K562 (cell line): ENCODE measurements at regions of chr5 and their contacts with region 1.

Region 1: GRCh38 chr5:150436141-150436680 is 13.3 kb downstream of the RPS14 start:
- DNase-seq: peak; percentile 88 to 91 (median 90)
- ATAC-seq: peak; percentile 95
- H3K4me3 ChIP-seq: no peak overlapping the region
- H3K27ac ChIP-seq: no peak overlapping the region
- H3K4me1 ChIP-seq: peaks cover 0 to 6% of the 10 kb centered on the region in 2 experiments; a peak in 3 of 5 replicates
- H3K27me3 ChIP-seq: peaks cover 0 to 6% of the 10 kb centered on the region in 2 experiments; a peak in 3 of 5 replicates
- CTCF ChIP-seq: peak; percentile 86 to 90 (median 89)
- EP300 ChIP-seq: no peak
- POLR2A ChIP-seq: no peak
- RAD21 ChIP-seq: peak; percentile 83 to 91

Region 2: GRCh38 chr5:150272526-150272925 is 163.7 kb before region 1 on chr5:
- CTCF ChIA-PET with region 1: interaction called, 5 read pairs
- POLR2A ChIA-PET with region 1: no interaction called
- in situ Hi-C with region 1: no loop called
- intact Hi-C with region 1: loop called (anchors 2 kb)
- DNase-seq: peak in 3 of 4 experiments; percentile 35 to 63 (median 62)
- ATAC-seq: peak; percentile 89
- H3K4me3 ChIP-seq: no peak overlapping the region
- H3K27ac ChIP-seq: no peak overlapping the region
- H3K4me1 ChIP-seq: no peaks in the 10 kb centered on the region
- H3K27me3 ChIP-seq: peaks cover 22 to 57% of the 10 kb centered on the region in 2 experiments; a peak in 4 of 5 replicates
- CTCF ChIP-seq: peak; percentile 65 to 82 (median 75)
- EP300 ChIP-seq: no peak
- POLR2A ChIP-seq: no peak
- RAD21 ChIP-seq: peak; percentile 90 to 94

Region 3: DNA sequence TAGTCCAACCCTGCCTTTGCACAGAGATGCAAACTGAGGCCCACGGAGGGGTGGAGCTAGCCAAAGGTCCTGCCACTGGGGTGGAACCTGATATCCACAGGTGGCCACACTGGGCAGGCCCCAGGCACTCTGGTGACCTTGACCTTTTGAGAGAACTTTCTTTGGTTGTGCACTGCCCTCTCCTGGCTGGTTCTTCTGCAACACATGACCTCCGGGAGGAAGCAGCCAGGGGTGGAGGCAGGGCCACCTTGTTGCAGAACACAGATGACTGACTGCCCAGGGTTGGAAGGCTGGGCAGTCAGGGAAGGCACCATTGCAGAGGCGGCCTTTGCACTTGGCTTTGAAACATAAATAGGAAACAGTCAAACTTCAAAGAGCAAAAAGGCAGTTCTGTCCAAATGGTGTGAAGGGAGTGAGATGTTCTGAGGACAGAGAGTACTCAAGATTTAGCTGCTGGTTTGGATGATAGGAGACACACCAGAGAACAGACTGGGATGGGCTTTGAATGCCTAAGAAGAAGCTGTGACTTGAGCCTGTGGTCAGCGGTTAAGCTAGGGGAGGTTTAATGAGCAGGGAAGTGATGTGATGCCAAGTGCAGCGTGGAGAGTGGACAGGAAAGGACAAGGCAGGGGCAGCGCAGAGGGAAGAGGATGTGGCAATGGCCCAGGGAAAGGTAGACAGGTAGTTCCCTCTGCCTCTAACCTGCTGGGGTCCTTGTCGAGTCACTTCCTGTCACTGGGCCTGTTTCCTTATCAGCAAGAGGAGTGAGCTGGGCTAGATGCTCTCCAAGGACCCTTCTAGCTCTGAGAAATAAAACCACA is 85.5 kb before region 1 on chr5:
- CTCF ChIA-PET with region 1: no interaction called
- POLR2A ChIA-PET with region 1: interaction called, 3 read pairs
- in situ Hi-C with region 1: no loop called
- intact Hi-C with region 1: loop called (anchors 2 kb)
- DNase-seq: peak; percentile 80 to 84 (median 82)
- ATAC-seq: peak; percentile 99
- H3K4me3 ChIP-seq: no peak overlapping the region
- H3K27ac ChIP-seq: no peak overlapping the region
- H3K4me1 ChIP-seq: no peaks in the 10 kb centered on the region; a peak in 1 of 5 replicates
- H3K27me3 ChIP-seq: peaks cover 9 to 18% of the 10 kb centered on the region in 2 experiments; a peak in 4 of 5 replicates
- CTCF ChIP-seq: peak; percentile 86 to 90 (median 87)
- EP300 ChIP-seq: no peak
- POLR2A ChIP-seq: no peak
- RAD21 ChIP-seq: peak; percentile 94 to 96

Region 4: GRCh38 chr5:150398722-150399523 is 37.3 kb before region 1 on chr5:
- CTCF ChIA-PET with region 1: interaction called, 7 read pairs
- POLR2A ChIA-PET with region 1: no interaction called
- in situ Hi-C with region 1: no loop called
- intact Hi-C with region 1: loop called (anchors 2 kb)
- DNase-seq: peak in 2 of 4 experiments; percentile 33 to 53
- ATAC-seq: peak; percentile 71
- H3K4me3 ChIP-seq: no peak overlapping the region
- H3K27ac ChIP-seq: no peak overlapping the region
- H3K4me1 ChIP-seq: peaks cover 5 to 10% of the 10 kb centered on the region in 2 experiments; a peak in 2 of 5 replicates
- H3K27me3 ChIP-seq: no peaks in the 10 kb centered on the region
- CTCF ChIP-seq: peak; percentile 49 to 93 (median 56); a peak in 5 of 6 replicates
- EP300 ChIP-seq: no peak
- POLR2A ChIP-seq: no peak
- RAD21 ChIP-seq: no peak; a peak in 1 of 4 replicates

Region 5: DNA sequence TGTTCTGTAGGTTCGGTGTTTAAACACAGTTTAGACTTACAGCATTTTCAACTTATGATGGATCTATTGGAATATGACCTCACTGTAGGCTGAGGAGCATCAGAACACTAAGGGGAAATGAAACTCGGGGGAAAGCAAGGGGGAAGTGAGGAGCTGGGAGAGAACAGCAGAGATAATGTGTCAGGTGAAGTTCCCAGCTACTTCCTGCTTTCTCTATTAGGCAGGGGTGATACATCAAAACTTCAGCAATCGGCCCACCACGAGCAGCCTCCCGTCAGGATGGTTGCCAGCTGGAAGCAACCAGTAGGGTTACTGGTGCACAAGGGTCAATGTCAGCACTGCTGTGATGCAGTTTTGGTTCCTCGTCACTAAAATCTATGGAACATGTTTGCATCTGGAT is 1120.6 kb after region 1 on chr5:
- CTCF ChIA-PET with region 1: no interaction called
- POLR2A ChIA-PET with region 1: no interaction called
- in situ Hi-C with region 1: no loop called
- intact Hi-C with region 1: no loop called
- DNase-seq: no peak
- ATAC-seq: no peak
- H3K4me3 ChIP-seq: no peak overlapping the region
- H3K27ac ChIP-seq: no peak overlapping the region
- H3K4me1 ChIP-seq: no peaks in the 10 kb centered on the region
- H3K27me3 ChIP-seq: peaks cover 13 to 52% of the 10 kb centered on the region in 2 experiments; a peak in 3 of 5 replicates
- CTCF ChIP-seq: no peak
- EP300 ChIP-seq: no peak
- POLR2A ChIP-seq: no peak
- RAD21 ChIP-seq: no peak